HEK293 (cell line): ENCODE measurements at regions of chr4 and their contacts with region 1.

Region 1: GRCh38 chr4:40908702-40909362 is 159.1 kb downstream of the NSUN7 start:
- H3K4me3 ChIP-seq: no peak overlapping the region
- H3K27ac ChIP-seq: no peak overlapping the region
- H3K4me1 ChIP-seq: no peaks in the 10 kb centered on the region
- CTCF ChIP-seq: peak; percentile 40; the same call in 1 of the 2 replicates

Region 2: GRCh38 chr4:40672536-40673526 is 236.0 kb before region 1 on chr4:
- CTCF ChIA-PET with region 1: no interaction called
- POLR2A ChIA-PET with region 1: no interaction called
- H3K4me3 ChIP-seq: no peak overlapping the region
- H3K27ac ChIP-seq: no peak overlapping the region
- H3K4me1 ChIP-seq: no peaks in the 10 kb centered on the region
- CTCF ChIP-seq: no peak

Region 3: DNA sequence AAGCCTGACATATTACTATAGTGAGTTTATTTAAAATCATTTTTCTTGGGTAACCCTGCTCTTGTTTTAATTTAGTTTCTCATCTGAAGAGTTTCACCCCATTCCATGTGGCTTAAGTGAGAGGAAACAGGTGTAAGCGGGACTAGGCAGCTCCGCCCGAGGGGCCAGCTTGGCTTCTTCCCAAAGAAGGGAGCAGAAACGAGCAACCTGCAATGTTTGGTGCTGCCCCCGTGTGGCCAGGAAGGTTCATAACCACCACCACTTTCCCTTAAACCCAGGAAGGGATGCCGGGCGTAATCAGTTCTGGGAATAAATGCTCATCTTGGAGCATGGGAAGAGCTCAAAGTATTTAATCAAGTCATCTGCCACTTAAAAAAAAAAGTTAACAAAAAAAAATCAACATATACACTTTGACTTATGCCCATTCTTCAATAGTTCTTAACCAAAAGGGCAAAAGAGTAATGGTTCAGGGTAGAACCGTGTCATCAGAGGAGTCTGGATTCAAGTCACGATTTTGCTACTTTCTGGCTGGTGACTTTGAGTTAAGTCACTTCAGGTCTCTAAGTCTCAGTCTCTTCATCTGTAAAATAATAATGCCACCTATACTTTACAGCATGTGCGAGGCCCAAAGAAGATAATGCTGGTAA is 11.2 kb before region 1 on chr4:
- CTCF ChIA-PET with region 1: interaction called, 14 read pairs
- POLR2A ChIA-PET with region 1: no interaction called
- H3K4me3 ChIP-seq: no peak overlapping the region
- H3K27ac ChIP-seq: no peak overlapping the region
- H3K4me1 ChIP-seq: no peaks in the 10 kb centered on the region
- CTCF ChIP-seq: peak; percentile 41; the same call in 1 of the 2 replicates

Region 4: DNA sequence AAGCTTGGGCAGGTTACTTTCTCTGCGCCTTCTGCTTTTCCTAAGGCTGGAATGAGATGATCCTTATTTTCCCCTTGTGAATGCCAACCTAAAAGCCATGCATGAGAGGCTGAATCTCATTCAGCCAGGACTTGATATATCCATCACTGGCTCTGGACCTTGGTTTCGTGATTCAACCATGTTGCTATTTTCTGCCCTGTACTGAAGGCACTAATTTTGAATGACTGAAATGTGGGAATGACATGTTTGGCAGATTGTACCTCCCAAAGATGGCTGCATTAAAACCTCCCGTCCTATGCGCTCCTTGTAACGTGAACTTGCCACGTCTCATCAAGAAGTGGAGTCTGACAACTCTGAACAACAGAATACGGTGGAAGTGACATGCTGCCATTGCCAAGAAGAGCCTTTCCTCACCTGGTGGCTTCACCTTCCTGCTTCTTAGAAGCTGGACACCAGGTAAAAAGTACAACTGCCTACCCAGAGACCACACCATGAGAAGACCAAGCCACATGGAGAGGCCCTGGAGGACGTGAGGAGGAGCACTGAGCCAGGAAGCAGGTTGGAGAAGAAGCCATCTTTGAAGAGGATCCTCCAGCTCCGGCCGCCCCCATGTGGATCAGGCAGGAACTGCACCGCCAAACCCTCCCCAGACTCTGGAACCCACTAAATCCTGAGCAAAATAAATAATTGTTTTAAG is 15.4 kb after region 1 on chr4:
- CTCF ChIA-PET with region 1: interaction called, 34 read pairs
- POLR2A ChIA-PET with region 1: no interaction called
- H3K4me3 ChIP-seq: no peak overlapping the region
- H3K27ac ChIP-seq: no peak overlapping the region
- H3K4me1 ChIP-seq: no peaks in the 10 kb centered on the region
- CTCF ChIP-seq: 0 out of 2 replicates have a peak, but pooled peaks have one; percentile 29